ENCODE measurements at regions of chr19 and their contacts with region 1.

Region 1: GRCh38 chr19:23686621-23687423 is at the start of gene ZNF675:
- DNase-seq: peak; percentile 92
- ATAC-seq: peak; percentile 97
- H3K4me3 ChIP-seq: peak within 1 kb of the TSS; percentile 91 to 97 (median 95)
- H3K27ac ChIP-seq: peak within 1 kb of the TSS; percentile 92
- H3K4me1 ChIP-seq: peaks cover 20% of the 10 kb centered on the region
- H3K27me3 ChIP-seq: no peaks in the 10 kb centered on the region
- CTCF ChIP-seq: peak; percentile 3; the same call in 1 of the 2 replicates
- EP300 ChIP-seq: no peak
- POLR2A ChIP-seq: peak; percentile 64 to 90
- RAD21 ChIP-seq: no peak
- total RNA-seq, gene ZNF675: 12.8 and 13.1 TPM in 2 replicates

Region 2: GRCh38 chr19:23395041-23395721 is 291.6 kb before region 1 on chr19 and contains the start of gene ZNF91:
- CTCF ChIA-PET with region 1: no interaction called
- POLR2A ChIA-PET with region 1: interaction called, 4 read pairs
- in situ Hi-C with region 1: loop called (anchors 10 kb)
- intact Hi-C with region 1: no loop called
- DNase-seq: peak; percentile 98
- ATAC-seq: peak; percentile 97
- H3K4me3 ChIP-seq: peak within 1 kb of the TSS; percentile 91 to 97 (median 95)
- H3K27ac ChIP-seq: peak within 1 kb of the TSS; percentile 96
- H3K4me1 ChIP-seq: peaks cover 35% of the 10 kb centered on the region
- H3K27me3 ChIP-seq: no peaks in the 10 kb centered on the region
- CTCF ChIP-seq: 0 out of 2 replicates have a peak, but pooled peaks have one; percentile 17
- EP300 ChIP-seq: no peak
- POLR2A ChIP-seq: peak; percentile 96 to 97
- RAD21 ChIP-seq: no peak
- total RNA-seq, gene ZNF91: 21.5 and 30.7 TPM in 2 replicates

Region 3: GRCh38 chr19:23699082-23699761 is 12.4 kb after region 1 on chr19:
- CTCF ChIA-PET with region 1: no interaction called
- POLR2A ChIA-PET with region 1: interaction called, 12 read pairs
- in situ Hi-C with region 1: no loop called
- intact Hi-C with region 1: no loop called
- DNase-seq: no peak
- ATAC-seq: peak; percentile 87
- H3K4me3 ChIP-seq: peak overlapping the region in 2 of 3 experiments; percentile 23 to 24; a peak in 4 of 6 replicates
- H3K27ac ChIP-seq: no peak overlapping the region
- H3K4me1 ChIP-seq: peaks cover under 1% of the 10 kb centered on the region; the same call in 1 of the 2 replicates
- H3K27me3 ChIP-seq: no peaks in the 10 kb centered on the region
- CTCF ChIP-seq: no peak
- EP300 ChIP-seq: no peak
- POLR2A ChIP-seq: no peak
- RAD21 ChIP-seq: no peak